ENCODE measurements at regions of chr3 and their contacts with region 1.

Region 1: GRCh38 chr3:13091898-13092611 is 18.8 kb upstream of the IQSEC1 start:
- DNase-seq: peak; percentile 88
- H3K4me3 ChIP-seq: peak overlapping the region; percentile 49
- H3K27ac ChIP-seq: peak overlapping the region; percentile 70
- H3K4me1 ChIP-seq: peaks cover 24% of the 10 kb centered on the region
- H3K27me3 ChIP-seq: no peaks in the 10 kb centered on the region
- CTCF ChIP-seq: peak; percentile 98

Region 2: DNA sequence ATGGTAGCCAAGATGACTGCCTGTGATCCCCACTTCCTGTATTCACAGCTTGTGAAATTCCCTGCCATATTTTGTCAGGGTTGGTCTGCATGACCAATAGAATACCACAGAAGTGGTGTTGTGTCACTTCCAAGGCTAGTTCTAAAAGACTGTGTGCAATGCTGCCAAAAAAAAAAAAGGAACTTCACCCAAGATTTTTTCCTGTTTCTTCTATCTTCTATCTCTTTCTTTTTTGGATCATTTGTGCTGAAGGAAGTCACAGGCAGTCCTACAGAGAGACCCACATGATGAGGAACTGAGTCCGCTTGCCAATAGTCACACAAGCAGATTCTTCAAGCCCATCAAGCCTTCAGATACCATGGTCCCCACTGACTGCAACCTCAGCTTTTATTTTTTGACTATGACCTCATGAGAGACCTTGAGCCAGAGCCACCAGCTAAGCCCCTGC is 410.1 kb before region 1 on chr3:
- intact Hi-C with region 1: no loop called
- DNase-seq: no peak
- H3K4me3 ChIP-seq: no peak overlapping the region
- H3K27ac ChIP-seq: peak overlapping the region; percentile 75
- H3K4me1 ChIP-seq: peaks cover 22% of the 10 kb centered on the region
- H3K27me3 ChIP-seq: no peaks in the 10 kb centered on the region
- CTCF ChIP-seq: no peak

Region 3: DNA sequence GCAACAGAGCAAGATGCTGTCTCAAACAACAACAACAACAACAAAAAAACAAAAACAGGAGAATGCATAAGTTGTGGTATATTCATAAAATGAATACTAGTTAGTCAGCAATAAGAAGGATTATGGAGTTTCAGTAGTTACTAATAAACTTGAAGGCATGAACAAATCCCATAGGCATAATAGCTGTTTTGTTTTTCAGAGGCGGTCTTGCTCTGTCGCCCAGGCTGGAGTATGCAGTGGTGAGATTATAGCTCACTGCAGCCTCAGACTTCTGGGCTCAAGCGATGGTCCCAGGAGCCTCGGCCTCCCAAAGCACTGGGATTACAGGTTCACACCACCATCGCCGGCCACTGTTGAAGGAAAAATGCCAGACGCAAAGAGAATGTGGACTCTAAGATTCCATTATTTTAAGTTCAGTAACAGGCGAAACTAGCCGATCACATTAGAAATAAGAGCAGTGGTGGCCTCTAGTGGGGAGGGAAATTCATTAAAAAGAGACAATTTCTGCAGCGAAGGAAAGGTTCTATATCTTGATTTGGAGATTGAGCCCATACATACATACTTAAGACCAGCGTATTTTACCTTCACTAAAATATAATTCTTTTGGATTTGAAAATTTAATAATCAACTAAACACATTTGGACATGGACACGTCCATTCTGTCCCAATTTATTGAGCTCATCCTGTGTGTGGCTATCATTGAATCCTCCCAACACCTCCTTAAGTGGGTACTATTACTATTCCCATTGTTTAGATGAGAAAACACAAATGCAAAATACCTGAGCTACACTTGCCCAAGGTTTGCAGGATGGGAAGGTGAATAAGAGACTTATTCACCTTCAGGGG is 360.7 kb after region 1 on chr3:
- intact Hi-C with region 1: loop called (anchors 5 kb)
- DNase-seq: no peak
- H3K4me3 ChIP-seq: peak overlapping the region; percentile 73
- H3K27ac ChIP-seq: peak overlapping the region; percentile 90
- H3K4me1 ChIP-seq: peaks cover 15% of the 10 kb centered on the region
- H3K27me3 ChIP-seq: no peaks in the 10 kb centered on the region
- CTCF ChIP-seq: peak; percentile 70

Region 4: DNA sequence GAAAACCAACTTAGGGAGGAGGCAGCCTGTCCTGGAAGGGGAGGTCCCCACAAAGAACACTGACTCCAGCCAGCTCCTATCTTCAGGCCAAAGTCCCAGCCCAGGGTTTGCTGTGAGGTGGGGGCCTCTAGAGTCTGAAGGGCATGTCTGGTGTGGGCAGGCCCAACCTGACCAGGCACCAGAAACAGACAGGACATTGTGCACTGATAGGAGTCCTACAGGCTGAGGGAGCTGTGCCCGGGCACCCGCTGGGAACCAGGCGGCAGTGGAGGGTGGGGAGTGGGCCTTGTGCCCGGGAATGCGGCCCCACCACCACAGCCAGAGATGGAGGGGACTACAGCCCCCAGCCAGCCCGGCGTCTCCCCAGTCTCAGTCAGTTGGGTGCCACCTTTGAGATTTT is 626.4 kb after region 1 on chr3:
- intact Hi-C with region 1: no loop called
- DNase-seq: no peak
- H3K4me3 ChIP-seq: no peak overlapping the region
- H3K27ac ChIP-seq: no peak overlapping the region
- H3K4me1 ChIP-seq: no peaks in the 10 kb centered on the region
- H3K27me3 ChIP-seq: peaks cover 12% of the 10 kb centered on the region
- CTCF ChIP-seq: no peak